Left cardiac atrium (tissue), 4 donors: ENCODE measurements at regions of chr20 and their contacts with region 1.

Region 1: GRCh38 chr20:17536944-17537444 is 5.8 kb upstream of the BFSP1 start:
- DNase-seq: peak; percentile 72
- ATAC-seq: peak; percentile 96 to 97

Region 2: DNA sequence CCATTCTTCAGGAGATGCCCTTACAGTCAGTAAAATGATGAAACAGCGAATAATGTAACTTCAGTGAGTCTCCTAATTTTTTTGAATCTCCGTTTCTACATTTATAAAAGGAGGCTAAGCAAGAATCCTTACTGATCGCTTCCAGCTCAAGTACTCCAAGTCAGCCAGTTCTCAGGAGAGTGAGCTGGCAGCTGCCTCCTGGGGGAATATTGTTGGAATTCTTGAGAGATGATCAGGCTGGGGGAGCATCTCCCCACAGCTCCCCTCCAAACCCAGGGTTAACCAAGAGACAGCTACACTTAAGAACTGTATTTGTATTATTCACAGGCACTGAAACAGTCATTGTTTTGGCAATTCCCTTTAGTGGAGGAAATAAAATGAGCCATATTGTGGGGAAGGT is 399.3 kb before region 1 on chr20:
- intact Hi-C with region 1: no loop called
- DNase-seq: no peak
- ATAC-seq: no peak

Region 3: DNA sequence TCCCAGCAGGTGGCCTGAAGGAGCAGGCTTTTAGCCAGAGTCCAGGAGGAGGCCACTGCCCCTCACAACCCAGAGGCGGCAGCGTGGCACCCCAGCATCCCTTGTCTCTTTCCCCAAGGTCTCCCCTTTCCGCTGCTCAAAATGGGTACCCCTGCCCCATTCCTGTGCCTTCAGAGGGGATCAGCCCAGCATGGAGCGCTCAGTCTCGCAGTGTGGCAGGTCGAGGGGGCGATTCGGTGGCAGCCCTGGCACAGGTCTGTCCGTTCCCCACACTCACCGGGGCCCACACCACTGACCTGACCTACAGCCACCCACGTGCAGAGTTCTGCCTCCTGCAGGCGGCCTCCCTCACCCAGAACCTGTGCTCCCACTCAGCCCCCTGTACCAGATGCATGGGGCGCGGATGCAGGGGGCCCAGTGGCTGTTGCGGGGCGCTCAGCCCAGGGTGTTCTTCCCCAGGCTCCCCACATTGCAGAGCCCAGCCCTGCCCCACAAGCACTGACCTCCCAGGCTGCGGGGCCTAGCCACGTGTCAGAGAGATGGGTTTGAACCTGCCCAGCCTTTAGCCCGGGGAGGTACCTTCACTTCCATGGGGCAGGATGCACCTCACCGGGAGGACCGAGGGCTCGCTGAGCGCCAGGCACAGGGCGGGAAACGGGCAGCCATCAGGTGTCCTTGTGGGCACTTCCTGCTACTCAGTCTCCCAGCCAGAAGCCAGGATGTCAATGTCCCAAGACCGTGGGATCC is 74.7 kb after region 1 on chr20:
- intact Hi-C with region 1: loop called (anchors 5 kb)
- DNase-seq: peak; percentile 27
- ATAC-seq: peak; percentile 3

Region 4: GRCh38 chr20:17617551-17618223 is 80.7 kb after region 1 on chr20:
- intact Hi-C with region 1: loop called (anchors 5 kb)
- DNase-seq: peak; percentile 58
- ATAC-seq: peak; percentile 15 to 46

Region 5: GRCh38 chr20:18164356-18164755 is 627.4 kb after region 1 on chr20:
- intact Hi-C with region 1: no loop called
- DNase-seq: no peak
- ATAC-seq: no peak